ENCODE measurements at regions of chr9 and their contacts with region 1.

Region 1: DNA sequence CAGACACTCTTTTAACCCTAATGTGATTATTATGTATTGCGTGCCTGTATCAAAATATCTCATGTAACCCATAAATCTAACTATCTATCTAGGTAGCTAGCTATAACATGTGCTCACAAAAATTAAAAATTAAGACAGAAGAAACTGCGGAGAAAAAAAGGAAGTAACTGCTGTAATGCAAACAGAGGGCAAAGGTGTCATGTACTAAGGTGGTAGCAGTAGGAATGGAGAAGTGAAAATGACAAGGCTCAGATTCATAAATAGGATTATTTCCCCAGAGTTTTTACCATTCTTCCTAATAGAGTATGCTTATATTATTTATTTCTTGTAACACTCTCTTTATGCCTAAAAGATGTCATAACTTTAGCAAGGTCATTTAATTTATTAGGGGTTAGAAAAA is 1527.5 kb upstream of the C9orf72 start:
- DNase-seq: no peak
- H3K4me3 ChIP-seq: no peak overlapping the region
- H3K4me3 Mint-ChIP-seq: peak overlapping the region in 1 of 8 donors; percentile 4
- H3K27ac ChIP-seq: no peak overlapping the region
- H3K27ac Mint-ChIP-seq: no peak overlapping the region
- H3K4me1 ChIP-seq: no peaks in the 10 kb centered on the region
- H3K4me1 Mint-ChIP-seq: no peaks in the 10 kb centered on the region
- H3K27me3 ChIP-seq: no peaks in the 10 kb centered on the region
- H3K27me3 Mint-ChIP-seq: no peaks in the 10 kb centered on the region

Region 2: DNA sequence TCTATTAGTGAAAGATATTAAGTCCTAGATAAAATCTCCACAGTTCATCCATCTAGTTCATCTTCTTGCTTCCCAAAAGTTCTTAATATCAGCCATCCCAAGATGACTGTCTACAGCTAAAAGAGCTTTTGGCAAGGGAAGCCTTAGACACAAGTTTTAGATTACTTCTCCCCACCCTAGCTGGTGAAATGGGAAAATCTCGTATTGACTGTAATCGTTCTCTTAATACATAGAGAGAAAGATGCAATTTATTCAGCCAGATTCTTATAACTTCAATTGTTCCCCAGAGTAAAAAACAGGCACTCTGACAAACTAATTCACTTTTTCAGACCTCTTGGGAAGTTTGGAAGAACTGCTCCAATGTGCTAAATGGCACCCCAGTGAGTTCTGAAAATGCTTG is 87.9 kb before region 1 on chr9:
- CTCF ChIA-PET with region 1: no interaction called
- POLR2A ChIA-PET with region 1: no interaction called
- intact Hi-C with region 1: no loop called
- DNase-seq: no peak
- H3K4me3 ChIP-seq: no peak overlapping the region
- H3K4me3 Mint-ChIP-seq: no peak overlapping the region
- H3K27ac ChIP-seq: no peak overlapping the region
- H3K27ac Mint-ChIP-seq: no peak overlapping the region
- H3K4me1 ChIP-seq: no peaks in the 10 kb centered on the region
- H3K4me1 Mint-ChIP-seq: no peaks in the 10 kb centered on the region
- H3K27me3 ChIP-seq: no peaks in the 10 kb centered on the region
- H3K27me3 Mint-ChIP-seq: no peaks in the 10 kb centered on the region

Region 3: GRCh38 chr9:29160763-29161353 is 60.1 kb after region 1 on chr9:
- CTCF ChIA-PET with region 1: no interaction called
- POLR2A ChIA-PET with region 1: no interaction called
- intact Hi-C with region 1: loop called (anchors 10 kb)
- DNase-seq: no peak
- H3K4me3 ChIP-seq: no peak overlapping the region
- H3K4me3 Mint-ChIP-seq: no peak overlapping the region
- H3K27ac ChIP-seq: no peak overlapping the region
- H3K27ac Mint-ChIP-seq: no peak overlapping the region
- H3K4me1 ChIP-seq: no peaks in the 10 kb centered on the region
- H3K4me1 Mint-ChIP-seq: no peaks in the 10 kb centered on the region
- H3K27me3 ChIP-seq: no peaks in the 10 kb centered on the region
- H3K27me3 Mint-ChIP-seq: no peaks in the 10 kb centered on the region

Measured in CD4-positive, alpha-beta memory T cell (primary cell).